ENCODE measurements at regions of chr2 and their contacts with region 1.

Region 1: DNA sequence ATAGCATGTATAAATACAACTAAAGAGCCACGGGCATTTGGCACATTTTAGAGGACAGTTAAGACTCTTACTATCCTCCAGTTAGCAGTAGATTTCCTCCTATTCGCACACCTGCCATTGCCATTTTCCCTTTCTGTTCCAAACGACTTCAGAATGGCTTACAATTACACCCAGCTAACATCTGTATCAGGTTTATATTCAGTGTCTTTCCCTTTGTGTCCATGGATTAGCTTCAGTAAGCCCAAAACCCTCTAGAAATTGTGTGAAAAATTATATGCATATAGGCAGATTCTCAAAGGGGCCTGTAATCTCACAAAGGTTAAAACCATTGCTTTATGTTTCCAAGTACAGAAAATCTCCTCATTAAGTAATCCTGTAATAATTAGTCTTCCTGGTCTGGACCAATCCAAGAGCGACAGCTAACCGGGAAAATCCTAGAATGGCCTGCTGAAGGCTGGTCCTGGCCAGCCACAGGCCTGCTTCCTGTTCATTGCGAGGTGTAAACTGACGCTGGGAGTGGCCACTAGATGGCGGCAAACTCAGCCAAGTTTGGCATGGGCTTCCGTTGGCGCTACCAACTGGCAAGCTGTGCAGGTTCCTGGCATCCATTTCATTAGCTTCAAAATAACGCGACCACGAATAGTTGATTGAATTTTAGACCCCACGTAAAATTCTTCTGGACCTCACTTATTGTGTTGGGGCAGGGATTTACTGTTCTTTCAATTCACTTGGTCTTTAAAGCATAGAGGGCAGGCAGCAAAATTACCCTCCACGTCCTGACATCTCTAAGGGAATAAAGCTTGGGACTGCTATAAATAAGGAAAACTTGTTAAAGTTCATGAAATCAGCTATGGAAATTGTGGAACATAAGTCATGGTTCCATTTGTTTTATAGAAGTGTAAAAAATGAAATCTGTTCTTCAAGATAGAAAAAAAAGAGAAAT is 17.1 kb downstream of the ARHGAP25 start:
- DNase-seq: peak; percentile 95
- H3K4me3 ChIP-seq: peak overlapping the region in 2 of 4 donors; percentile 6 to 31
- H3K27ac ChIP-seq: no peak overlapping the region
- H3K4me1 ChIP-seq: peaks cover 0 to 10% (median 8%) of the 10 kb centered on the region in 4 donors
- H3K27me3 ChIP-seq: no peaks in the 10 kb centered on the region
- CTCF ChIP-seq: peak; percentile 89 to 94 (median 93)
- EP300 ChIP-seq: no peak
- POLR2A ChIP-seq: no peak

Region 2: GRCh38 chr2:68832233-68832869 is 80.7 kb after region 1 on chr2:
- intact Hi-C with region 1: loop called (anchors 2 kb)
- DNase-seq: peak; percentile 92
- H3K4me3 ChIP-seq: no peak overlapping the region
- H3K27ac ChIP-seq: peak overlapping the region; percentile 79 to 83 (median 80)
- H3K4me1 ChIP-seq: peaks cover 45 to 53% (median 49%) of the 10 kb centered on the region in 4 donors
- H3K27me3 ChIP-seq: no peaks in the 10 kb centered on the region
- CTCF ChIP-seq: no peak
- EP300 ChIP-seq: no peak
- POLR2A ChIP-seq: no peak

Region 3: DNA sequence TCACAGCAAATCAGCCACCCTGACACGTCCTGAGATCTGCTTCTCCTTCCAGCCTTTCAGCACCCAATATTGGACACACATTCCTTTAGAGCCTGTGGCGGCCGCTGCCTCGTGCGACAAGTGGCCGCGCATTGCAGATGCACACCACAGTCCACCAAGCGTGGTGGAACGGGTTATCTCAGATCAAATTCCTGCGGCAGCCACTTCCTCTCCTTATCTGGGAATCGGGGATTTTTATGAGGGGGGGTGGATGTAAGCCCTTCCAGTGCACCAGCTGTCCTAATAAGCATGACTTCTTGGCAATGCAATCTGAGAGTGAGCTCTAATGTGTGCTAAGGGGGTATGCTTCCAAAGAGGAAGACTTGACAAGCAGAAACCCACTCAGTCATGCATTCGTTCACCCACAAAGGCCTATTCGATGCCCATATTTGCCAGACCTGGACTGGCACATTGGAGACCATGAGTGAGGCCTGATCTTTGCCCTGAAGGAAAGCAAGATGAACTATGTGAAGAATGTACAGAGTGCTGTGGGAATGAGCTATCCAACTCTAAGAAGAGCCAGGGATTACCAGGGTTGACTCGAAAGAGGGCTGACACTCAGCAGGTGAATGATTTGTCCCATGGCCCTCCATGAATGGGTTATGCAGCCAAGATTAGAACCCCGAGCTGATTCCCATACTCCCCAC is 138.0 kb after region 1 on chr2:
- intact Hi-C with region 1: no loop called
- DNase-seq: no peak
- H3K4me3 ChIP-seq: no peak overlapping the region
- H3K27ac ChIP-seq: no peak overlapping the region
- H3K4me1 ChIP-seq: no peaks in the 10 kb centered on the region
- H3K27me3 ChIP-seq: no peaks in the 10 kb centered on the region
- CTCF ChIP-seq: no peak
- EP300 ChIP-seq: no peak
- POLR2A ChIP-seq: no peak

Region 4: DNA sequence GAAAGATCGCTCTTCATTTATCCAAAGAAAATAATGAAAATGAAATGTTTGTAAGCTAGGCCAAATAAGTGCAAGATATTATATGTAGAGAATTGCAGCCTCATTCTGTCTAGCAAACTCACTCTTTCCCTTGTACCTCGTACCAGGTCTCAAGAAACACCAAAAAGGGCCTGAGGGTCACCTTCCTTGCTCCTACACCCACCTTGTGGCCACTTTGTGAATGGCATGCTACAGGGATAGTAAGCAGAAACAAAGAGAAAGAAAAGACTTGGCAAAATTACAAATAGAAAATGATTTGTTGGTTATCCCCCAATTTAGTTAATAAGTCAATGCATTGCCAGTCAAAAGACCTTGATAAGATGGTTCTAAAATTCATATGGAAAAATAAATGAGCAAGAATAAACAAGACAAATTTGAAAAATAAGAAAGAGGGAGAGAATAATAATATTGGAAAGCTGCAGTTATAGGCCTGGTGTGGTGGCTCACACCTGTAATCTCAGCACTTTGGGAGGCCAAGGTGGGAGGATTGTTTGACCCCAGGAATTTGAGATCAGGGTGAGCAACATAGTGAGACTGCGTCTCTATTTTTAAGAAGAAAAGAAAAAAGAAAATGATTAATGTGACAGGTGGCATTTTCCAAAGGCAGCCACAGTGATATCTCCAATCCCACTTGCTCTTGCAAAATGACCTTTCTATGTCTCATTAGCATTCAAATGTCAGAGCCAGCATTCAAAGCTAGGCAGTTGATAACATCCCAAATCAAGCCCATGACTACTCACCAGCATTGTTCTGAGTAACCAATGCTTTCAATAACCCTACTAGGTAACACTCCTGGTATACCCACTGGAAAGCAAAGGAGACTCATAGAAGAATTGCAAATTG is 158.4 kb after region 1 on chr2:
- intact Hi-C with region 1: loop called (anchors 1 kb)
- DNase-seq: no peak
- H3K4me3 ChIP-seq: no peak overlapping the region
- H3K27ac ChIP-seq: no peak overlapping the region
- H3K4me1 ChIP-seq: peaks cover 9 to 17% (median 15%) of the 10 kb centered on the region in 4 donors
- H3K27me3 ChIP-seq: no peaks in the 10 kb centered on the region
- CTCF ChIP-seq: peak; percentile 86 to 94 (median 87)
- EP300 ChIP-seq: no peak
- POLR2A ChIP-seq: no peak

Measured in esophagus muscularis mucosa (tissue), 4 donors.